ENCODE measurements at regions of chr3 and their contacts with region 1.

Region 1: DNA sequence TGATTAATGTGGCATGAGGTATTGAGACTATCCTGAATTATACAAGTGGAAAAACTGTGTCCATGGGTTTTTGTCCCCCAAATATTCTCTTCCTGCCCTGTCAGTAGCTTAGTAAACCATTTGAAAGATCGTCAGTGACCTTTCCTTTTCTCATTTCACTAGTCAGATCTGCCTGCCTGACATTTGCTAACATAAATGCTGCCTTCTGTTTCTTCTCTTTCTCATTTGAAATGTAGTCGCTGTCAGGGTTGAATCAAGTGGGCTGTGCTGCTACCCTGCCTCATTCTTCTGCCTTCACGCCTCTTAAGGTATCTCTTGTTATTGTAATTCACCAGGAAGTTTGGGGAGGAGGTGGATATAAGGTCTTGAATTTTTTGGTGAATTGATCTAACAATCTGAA is 67.5 kb downstream of the LRCH3 start:
- DNase-seq: no peak
- H3K4me3 Mint-ChIP-seq: no peak overlapping the region
- H3K27ac Mint-ChIP-seq: no peak overlapping the region
- H3K4me1 Mint-ChIP-seq: peaks cover 4% of the 10 kb centered on the region
- H3K27me3 Mint-ChIP-seq: no peaks in the 10 kb centered on the region

Region 2: GRCh38 chr3:197847866-197848401 is 10.7 kb before region 1 on chr3:
- CTCF ChIA-PET with region 1: interaction called, 5 read pairs
- POLR2A ChIA-PET with region 1: no interaction called
- intact Hi-C with region 1: loop called (anchors 1 kb)
- DNase-seq: peak; percentile 43
- H3K4me3 Mint-ChIP-seq: peak overlapping the region; percentile 59
- H3K27ac Mint-ChIP-seq: peak overlapping the region; percentile 82
- H3K4me1 Mint-ChIP-seq: peaks cover 26% of the 10 kb centered on the region
- H3K27me3 Mint-ChIP-seq: no peaks in the 10 kb centered on the region